SK-MEL-5 (cell line): ENCODE measurements at regions of chr6 and their contacts with region 1.

Region 1: GRCh38 chr6:27374824-27375612 is 13.5 kb upstream of the ZNF391 start:
- DNase-seq: peak; percentile 61

Region 2: DNA sequence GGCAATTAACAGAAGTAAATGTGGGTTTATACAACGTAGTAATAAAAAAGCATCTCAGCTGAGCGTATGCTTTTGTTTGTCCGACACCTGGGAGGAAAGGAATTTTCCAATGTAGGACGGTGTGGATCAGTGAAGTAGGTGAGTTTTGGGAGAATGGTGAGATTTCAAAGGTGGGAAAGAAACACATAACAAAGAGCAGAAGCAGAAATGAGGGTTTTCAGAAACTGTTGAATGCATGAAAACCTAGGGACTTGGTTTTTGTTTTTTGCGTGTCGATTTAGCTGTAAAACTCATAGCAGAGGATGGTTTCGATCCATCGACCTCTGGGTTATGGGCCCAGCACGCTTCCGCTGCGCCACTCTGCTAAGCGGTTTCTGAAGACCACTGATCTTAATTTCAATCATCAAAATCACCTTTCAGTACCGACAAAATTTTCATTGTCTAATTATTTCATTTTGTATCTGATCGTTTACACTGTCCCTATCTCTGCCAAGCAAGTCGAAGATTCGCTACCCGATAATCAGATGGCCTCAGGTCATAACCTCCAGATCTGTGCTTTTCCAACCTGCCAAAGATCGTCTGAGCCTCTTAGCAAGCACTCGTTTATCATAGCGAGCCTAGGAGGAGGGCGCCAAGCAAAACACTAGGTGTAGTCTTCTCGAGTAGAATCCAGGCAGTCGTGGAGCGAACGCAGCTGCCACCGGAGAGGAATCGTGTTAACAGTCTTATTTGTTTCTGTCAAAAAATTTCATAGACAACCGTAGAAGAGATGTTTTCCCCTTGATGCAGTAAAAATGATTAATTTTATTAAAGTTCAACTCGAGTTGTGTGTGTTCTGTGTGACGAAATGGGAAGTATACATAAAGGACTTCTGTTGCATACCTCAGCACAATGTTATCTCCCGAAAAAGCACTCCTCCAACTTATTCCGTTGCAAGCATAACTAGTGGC is 42.1 kb before region 1 on chr6:
- in situ Hi-C with region 1: loop called (anchors 5 kb)
- DNase-seq: peak; percentile 89

Region 3: DNA sequence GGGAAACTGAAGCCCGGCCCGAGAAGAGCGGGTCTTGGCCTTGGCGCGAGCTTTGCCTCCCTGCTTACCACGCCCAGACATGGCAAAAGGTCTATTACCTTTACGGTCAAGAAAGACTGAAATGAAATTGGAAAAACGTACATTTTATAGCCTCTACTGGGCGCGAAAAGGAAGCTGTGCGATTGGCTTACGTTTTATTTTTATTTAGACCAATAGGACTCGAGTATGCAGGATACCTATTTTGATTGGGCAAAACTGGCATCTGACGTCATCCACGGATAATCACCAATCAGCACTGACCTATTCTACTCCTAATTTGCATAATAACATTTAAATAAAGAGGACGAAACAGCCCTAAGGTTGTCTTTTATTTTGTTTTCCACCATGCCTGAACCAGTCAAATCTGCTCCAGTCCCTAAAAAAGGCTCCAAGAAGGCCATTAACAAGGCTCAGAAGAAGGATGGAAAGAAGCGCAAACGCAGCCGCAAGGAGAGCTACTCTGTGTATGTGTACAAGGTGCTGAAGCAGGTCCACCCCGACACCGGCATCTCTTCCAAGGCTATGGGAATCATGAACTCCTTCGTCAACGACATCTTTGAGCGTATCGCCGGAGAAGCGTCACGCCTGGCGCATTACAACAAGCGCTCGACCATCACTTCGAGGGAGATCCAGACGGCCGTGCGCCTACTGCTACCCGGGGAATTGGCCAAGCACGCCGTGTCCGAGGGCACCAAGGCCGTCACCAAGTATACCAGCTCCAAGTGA is 439.8 kb after region 1 on chr6:
- in situ Hi-C with region 1: no loop called
- DNase-seq: peak; percentile 94